BJ (cell line): ENCODE measurements at regions of chr20 and their contacts with region 1.

Region 1: GRCh38 chr20:2508631-2509467 is at the start of gene ZNF343:
- DNase-seq: no peak
- H3K4me3 ChIP-seq: peak within 1 kb of the TSS; percentile 74
- H3K27me3 ChIP-seq: no peaks in the 10 kb centered on the region
- CTCF ChIP-seq: no peak
- polyA plus RNA-seq, gene ZNF343: 8.2 and 9.8 TPM in 2 replicates

Region 2: GRCh38 chr20:2473516-2473915 is 35.3 kb before region 1 on chr20:
- CTCF ChIA-PET with region 1: no interaction called
- POLR2A ChIA-PET with region 1: no interaction called
- DNase-seq: peak; percentile 58
- H3K4me3 ChIP-seq: no peak overlapping the region
- H3K27me3 ChIP-seq: no peaks in the 10 kb centered on the region
- CTCF ChIP-seq: no peak

Region 3: DNA sequence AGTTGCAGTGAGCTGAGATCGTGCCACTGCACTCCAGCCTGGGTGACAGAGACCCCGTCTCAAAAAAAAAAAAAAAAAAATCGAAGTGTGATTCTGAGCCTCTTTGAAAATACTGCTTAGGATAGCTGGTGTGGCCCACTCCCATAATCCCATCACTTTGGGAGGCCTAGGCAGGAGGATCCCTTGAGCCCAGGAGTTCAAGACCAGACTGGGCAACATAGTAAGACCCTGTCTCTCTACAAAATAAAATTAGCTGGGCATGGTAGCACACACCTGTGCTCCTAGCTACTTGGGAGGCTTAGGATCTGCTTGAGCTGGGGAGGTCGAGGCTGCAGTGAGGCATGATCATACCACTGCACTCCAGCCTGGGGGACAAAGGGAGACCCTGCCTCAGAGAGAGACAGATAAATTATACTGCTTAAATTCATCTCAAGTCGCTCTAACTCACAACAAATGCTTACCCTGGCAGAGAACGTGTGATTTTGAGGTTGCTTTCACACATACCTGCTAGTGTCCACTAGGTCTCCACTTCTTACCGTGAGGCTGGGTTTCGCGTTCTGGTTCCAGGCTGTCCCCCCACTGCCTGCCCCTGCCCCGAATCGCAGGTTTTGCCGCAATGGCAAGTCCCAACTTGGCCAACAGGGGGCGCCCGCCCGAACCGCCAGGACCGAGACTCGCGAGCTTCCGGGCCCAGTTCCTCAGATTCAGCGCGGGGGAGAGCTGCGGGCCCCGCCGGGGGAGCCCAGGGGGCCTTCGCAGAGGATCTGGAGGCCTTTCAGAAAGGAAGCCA is 15.3 kb after region 1 on chr20:
- CTCF ChIA-PET with region 1: interaction called, 32 read pairs
- POLR2A ChIA-PET with region 1: no interaction called
- DNase-seq: no peak
- H3K4me3 ChIP-seq: peak overlapping the region; percentile 68
- H3K27me3 ChIP-seq: peaks cover 1% of the 10 kb centered on the region; the same call in 1 of the 2 replicates
- CTCF ChIP-seq: peak; percentile 97

Region 4: DNA sequence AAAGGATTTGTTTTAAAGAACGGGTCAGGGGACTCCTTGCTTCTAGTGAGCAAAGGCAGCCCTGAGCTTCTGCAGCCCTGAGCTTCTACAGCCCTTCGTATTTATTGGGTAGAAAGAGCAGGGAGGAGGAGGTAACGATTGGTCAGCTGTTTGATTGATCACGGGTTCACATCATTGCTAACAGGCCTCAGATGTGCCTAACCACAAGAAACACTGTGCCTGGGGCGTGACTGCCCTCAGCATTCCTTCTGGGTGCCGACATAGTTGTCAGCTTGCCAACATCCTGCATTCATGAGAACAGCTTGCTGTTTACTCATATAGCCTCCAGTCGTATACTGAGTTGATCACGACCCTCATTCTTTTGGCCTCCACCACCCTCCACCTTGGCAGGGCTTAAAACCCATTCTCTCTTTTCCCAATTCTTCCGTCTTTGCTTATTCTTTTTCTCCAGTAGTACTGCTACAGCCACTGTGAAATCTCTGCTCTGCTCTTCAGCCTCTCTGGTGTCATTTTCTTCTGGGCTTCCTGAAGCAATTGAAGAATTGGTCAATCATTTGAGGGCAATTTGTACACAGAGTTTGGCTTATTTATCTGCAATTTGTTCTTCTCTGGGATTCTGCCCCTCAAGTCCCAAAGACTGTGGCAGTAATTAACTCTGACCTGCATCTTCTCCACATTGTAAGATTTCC is 118.1 kb after region 1 on chr20:
- CTCF ChIA-PET with region 1: no interaction called
- POLR2A ChIA-PET with region 1: no interaction called
- DNase-seq: peak; percentile 31
- H3K4me3 ChIP-seq: no peak overlapping the region
- H3K27me3 ChIP-seq: peaks cover 3% of the 10 kb centered on the region; the same call in 1 of the 2 replicates
- CTCF ChIP-seq: no peak